Dorsolateral prefrontal cortex (tissue), 120 donors: ENCODE measurements at regions of chr21 and their contacts with region 1.

Region 1: GRCh38 chr21:17858747-17859146 is 39.6 kb upstream of the C21orf91 start:
- DNase-seq: peak in 7 of 10 donors; percentile 24 to 77 (median 50)
- H3K4me3 ChIP-seq: peak overlapping the region in 2 of 59 donors; percentile 9 to 27
- H3K27ac ChIP-seq: peak overlapping the region; percentile 45 to 99 (median 94)
- H3K27me3 ChIP-seq: no peaks in the 10 kb centered on the region
- CTCF ChIP-seq: no peak

Region 2: GRCh38 chr21:17903029-17903806 is 44.5 kb after region 1 on chr21:
- intact Hi-C with region 1: loop called in 1 of 2 experiments (anchors 5 kb)
- DNase-seq: no peak
- H3K4me3 ChIP-seq: peak overlapping the region in 4 of 59 donors; percentile 1 to 14 (median 5)
- H3K27ac ChIP-seq: peak overlapping the region in 48 of 59 donors; percentile 13 to 87 (median 67)
- H3K27me3 ChIP-seq: no peaks in the 10 kb centered on the region
- CTCF ChIP-seq: peak; percentile 27 to 79 (median 59)

Region 3: DNA sequence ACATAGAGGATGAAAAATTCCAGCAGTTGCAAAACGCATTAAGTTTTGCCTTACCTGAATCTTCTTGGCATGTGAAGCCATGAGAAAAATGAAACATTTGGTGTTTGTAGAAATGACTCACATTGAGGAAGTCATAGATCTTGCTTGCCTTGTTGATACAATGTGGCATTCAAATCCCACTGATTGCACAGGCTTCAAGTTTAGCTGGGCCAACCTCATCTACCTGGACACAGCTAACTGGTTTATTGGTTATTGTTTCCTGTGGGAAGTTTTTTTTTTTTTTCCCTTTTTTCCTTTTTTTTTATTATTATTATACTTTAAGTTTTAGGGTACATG is 129.3 kb after region 1 on chr21:
- intact Hi-C with region 1: no loop called
- DNase-seq: no peak
- H3K4me3 ChIP-seq: no peak overlapping the region
- H3K27ac ChIP-seq: no peak overlapping the region
- H3K27me3 ChIP-seq: no peaks in the 10 kb centered on the region
- CTCF ChIP-seq: no peak

Region 4: DNA sequence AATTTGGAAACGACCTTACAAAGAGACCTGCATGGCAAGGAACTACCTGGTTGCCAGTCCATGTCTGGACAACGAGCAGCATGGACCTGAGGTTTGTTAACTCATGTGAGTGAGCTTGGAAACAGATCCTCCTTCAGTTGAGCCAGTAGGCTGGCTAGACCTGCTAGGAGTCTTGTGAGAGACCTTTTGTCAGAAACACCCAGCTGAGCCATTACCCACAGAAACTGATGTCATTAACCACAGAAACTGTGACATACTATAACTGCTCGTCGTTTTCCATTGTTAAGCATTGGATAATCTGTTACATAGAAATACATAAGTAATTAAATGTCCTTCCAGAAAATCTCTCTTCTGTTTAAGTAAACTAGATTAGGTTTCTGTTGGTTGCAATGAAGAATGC is 171.5 kb after region 1 on chr21:
- intact Hi-C with region 1: no loop called
- DNase-seq: no peak
- H3K4me3 ChIP-seq: no peak overlapping the region
- H3K27ac ChIP-seq: no peak overlapping the region
- H3K27me3 ChIP-seq: no peaks in the 10 kb centered on the region
- CTCF ChIP-seq: no peak